ENCODE measurements at regions of chr12 and their contacts with region 1.

Region 1: DNA sequence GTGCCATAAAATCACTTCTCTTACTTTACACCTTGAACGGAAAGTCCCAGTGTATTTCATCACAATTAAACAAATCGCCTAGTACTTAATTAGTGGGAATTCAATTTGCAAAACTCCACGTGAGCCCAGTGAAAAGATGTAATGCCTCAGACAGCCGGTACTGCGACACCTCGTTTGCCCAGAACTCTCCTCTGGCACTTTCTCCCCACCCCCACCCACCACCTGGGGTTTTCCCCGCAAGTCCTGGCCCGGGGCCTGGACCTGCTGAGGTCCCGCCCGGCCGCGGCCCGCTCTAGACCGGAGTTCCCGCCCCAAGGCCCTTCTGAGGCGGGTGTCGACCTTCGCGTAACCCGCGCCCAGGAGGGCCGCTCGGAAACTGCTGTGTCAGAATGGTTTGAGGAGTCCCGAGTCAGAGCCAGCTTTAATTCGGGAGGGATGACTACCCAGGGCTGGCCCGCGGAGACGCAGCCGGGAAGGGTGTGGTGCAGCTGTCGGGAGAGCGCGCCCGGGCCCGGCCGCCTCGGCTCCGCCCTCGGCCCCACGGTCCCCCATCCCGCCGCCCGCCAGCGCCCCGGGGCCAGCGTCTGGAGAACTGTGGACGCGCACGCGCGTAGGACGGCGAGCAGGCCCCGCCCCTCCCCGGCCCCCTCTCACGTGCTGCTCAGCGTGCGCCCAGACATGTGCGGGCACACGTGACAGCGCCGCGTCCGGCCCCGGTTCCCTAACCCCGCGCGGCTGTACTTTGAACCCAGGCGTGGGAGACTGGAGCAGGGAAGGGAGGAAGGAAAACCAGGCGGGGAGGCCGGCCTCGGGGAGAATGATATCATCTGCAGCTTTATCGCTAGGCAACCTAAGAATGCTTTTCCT is 10.8 kb downstream of the BHLHE41 start:
- DNase-seq: peak; percentile 96 to 97
- ATAC-seq: peak; percentile 89

Region 2: DNA sequence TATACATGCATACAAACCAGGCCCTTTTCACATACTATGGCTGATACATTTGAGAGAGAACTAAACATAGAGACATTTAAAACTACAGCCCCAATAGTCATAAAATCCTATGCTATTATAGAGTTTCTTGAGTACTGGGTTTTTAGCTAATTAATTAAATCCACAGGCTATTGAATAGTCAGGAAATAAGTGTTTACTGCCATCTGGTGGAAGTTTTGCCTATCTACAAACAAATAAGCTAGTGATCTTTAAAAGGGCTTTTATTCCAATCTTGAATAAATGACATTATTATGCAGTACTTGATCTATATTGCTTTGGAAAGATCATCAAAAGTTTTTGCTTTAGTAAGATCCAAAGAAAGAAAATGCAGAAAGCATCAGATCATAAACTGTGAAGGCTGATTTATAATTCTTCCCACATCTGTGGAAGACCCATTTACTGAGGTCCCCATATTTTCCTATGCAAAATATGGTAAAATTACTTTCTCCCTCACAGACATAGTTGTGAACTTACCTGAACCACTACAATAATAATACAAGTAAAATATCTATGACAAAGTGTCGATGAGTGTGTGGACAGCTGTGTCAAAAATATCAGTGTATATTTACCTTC is 587.6 kb after region 1 on chr12:
- intact Hi-C with region 1: loop called in 1 of 2 experiments (anchors 10 kb)
- DNase-seq: no peak
- ATAC-seq: no peak